Sigmoid colon (tissue), 7 donors: ENCODE measurements at regions of chr4 and their contacts with region 1.

Region 1: DNA sequence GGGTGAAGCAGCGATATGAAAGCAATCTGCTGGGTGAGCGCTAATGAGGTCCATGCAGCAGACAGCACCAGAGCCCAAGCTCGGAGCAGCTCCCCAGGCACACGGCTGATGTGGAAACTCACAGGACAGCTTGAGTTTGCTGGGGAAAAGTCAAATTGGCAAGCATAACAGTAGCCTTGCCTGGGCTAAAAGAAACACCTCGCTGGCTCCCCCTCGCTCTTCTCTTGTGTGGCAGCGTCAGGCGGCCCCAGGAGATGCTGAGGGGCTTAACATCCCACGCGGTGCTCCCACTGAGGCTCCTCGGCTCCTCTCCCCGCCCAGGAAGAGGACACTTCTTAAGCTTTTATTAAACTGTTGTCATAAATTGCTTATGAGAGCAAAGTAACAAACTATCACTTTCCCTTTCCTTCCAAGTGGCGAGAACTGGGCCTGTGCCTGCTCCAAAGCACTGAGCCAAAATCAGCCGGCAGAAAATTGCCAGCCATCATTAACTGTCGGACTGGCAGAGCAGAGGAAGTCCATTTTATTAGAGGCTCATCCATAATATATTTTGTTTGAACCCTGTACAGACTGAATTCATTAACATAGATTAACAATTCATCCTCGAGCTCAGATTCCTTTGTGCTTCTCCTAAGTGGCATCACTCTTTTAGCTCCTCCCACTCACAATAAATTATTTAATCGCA is 111.4 kb downstream of the TSPAN5 start:
- DNase-seq: peak; percentile 75
- H3K4me3 ChIP-seq: peak overlapping the region; percentile 36 to 51 (median 46)
- H3K27ac ChIP-seq: peak overlapping the region; percentile 68 to 83 (median 80)
- H3K4me1 ChIP-seq: peaks cover 0 to 15% (median 9%) of the 10 kb centered on the region in 4 donors
- H3K27me3 ChIP-seq: no peaks in the 10 kb centered on the region
- CTCF ChIP-seq: no peak
- EP300 ChIP-seq: no peak
- POLR2A ChIP-seq: no peak

Region 2: DNA sequence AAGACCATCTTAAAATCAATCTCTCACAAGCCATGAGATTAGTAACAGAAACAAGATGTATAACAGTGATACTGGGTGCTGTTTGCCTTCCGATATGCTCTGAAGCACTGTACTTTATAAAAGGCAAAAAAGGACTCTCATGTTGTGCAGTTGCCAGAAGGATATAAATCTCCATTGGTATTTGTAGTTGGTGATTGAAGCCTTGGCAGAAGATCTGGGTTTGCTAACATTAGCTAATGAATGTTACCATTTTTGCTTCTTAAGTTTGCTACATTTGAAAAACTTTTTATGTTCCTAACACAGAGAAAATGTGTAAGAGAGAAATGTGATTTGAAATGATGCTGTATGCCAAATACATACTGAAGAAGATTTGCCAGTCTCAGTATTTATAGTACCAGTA is 241.5 kb before region 1 on chr4:
- intact Hi-C with region 1: no loop called
- DNase-seq: no peak
- H3K4me3 ChIP-seq: no peak overlapping the region
- H3K27ac ChIP-seq: no peak overlapping the region
- H3K4me1 ChIP-seq: peaks cover 0 to 7% (median 0%) of the 10 kb centered on the region in 4 donors
- H3K27me3 ChIP-seq: no peaks in the 10 kb centered on the region
- CTCF ChIP-seq: no peak
- EP300 ChIP-seq: no peak
- POLR2A ChIP-seq: no peak

Region 3: DNA sequence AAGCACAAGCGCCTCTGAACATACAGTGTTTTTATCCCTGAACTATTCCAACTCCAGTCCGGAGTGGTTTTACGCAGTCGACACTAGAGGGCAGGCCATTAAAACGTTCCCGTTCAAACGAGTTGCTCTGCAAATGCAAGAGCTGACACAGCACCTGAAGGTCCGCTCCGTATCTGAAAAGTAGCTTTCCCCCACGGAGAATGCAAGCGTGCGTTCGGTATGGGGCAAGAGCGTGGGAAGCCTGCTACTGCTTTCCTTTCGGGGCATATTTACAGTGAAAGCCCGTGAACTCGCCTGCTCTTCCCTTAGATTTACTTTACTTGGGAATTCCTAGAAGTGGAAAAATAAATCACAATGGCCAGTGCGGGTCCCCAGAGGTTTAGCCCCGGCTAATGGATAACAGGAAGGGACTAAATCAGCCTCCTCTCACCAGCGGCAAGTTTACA is 79.4 kb before region 1 on chr4:
- intact Hi-C with region 1: loop called (anchors 1 kb)
- DNase-seq: peak; percentile 89
- H3K4me3 ChIP-seq: peak overlapping the region in 3 of 4 donors; percentile 25 to 45 (median 42)
- H3K27ac ChIP-seq: peak overlapping the region in 2 of 4 donors; percentile 8 to 23
- H3K4me1 ChIP-seq: peaks cover 0 to 14% (median 12%) of the 10 kb centered on the region in 4 donors
- H3K27me3 ChIP-seq: no peaks in the 10 kb centered on the region
- CTCF ChIP-seq: peak; percentile 64 to 73 (median 69)
- EP300 ChIP-seq: no peak
- POLR2A ChIP-seq: no peak